Activated T-helper 1 cell treated with anti-CD3 and anti-CD28 coated beads, Interleukin-12 subunit alpha, Interleukin-12 subunit beta, Interleukin-2, Interleukin-4 antibody, amounts not matched to agents 30 ng/mL and 10 ng/mL and 1 ng/mL, durations not matched to agents 14 hours and 24 hours and 36 hours (primary cell): ENCODE measurements at regions of chr13 and their contacts with region 1.

Region 1: DNA sequence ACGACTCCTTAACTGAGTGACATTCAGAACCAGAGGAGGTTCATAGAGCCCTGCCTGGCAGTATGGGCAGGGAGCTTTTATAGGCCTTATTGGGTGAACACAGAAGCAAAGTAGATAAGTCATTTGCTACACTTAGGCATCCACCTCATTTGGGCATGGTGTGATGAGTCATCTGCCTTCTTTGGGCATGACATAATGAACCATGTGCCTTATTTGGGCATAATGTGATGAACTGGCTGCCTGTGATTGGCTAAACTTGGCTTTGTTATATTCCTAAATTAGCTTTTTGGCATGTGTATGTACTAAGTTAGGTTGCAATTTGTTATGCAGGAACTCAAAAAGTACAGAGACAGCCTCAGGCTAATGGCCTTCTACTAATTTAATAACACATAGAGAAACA is 2210.2 kb upstream of the PCDH20 start:
- DNase-seq: no peak
- H3K4me3 Mint-ChIP-seq: no peak overlapping the region
- H3K27ac Mint-ChIP-seq: no peak overlapping the region
- H3K4me1 Mint-ChIP-seq: no peaks in the 10 kb centered on the region
- H3K27me3 Mint-ChIP-seq: no peaks in the 10 kb centered on the region

Region 2: GRCh38 chr13:63455938-63456337 is 169.9 kb before region 1 on chr13:
- intact Hi-C with region 1: no loop called
- DNase-seq: no peak
- H3K4me3 Mint-ChIP-seq: no peak overlapping the region
- H3K27ac Mint-ChIP-seq: no peak overlapping the region
- H3K4me1 Mint-ChIP-seq: no peaks in the 10 kb centered on the region
- H3K27me3 Mint-ChIP-seq: no peaks in the 10 kb centered on the region

Region 3: GRCh38 chr13:63643543-63643942 is 17.7 kb after region 1 on chr13:
- intact Hi-C with region 1: loop called (anchors 2 kb)
- DNase-seq: no peak
- H3K4me3 Mint-ChIP-seq: no peak overlapping the region
- H3K27ac Mint-ChIP-seq: no peak overlapping the region
- H3K4me1 Mint-ChIP-seq: no peaks in the 10 kb centered on the region
- H3K27me3 Mint-ChIP-seq: no peaks in the 10 kb centered on the region